Heart right ventricle (tissue), 16 donors: ENCODE measurements at regions of chr1 and their contacts with region 1.

Region 1: GRCh38 chr1:158124999-158125398 is 55.7 kb upstream of the CD1D start:
- DNase-seq: peak; percentile 72 to 94
- ATAC-seq: peak; percentile 93 to 99 (median 97)
- H3K4me3 ChIP-seq: peak overlapping the region in 1 of 10 donors; percentile 28
- H3K27ac ChIP-seq: no peak overlapping the region
- H3K4me1 ChIP-seq: peaks cover 0 to 4% (median 0%) of the 10 kb centered on the region in 9 donors
- H3K27me3 ChIP-seq: peaks cover 0 to 17% (median 8%) of the 10 kb centered on the region in 7 donors
- CTCF ChIP-seq: peak; percentile 86 to 96 (median 93)

Region 2: GRCh38 chr1:156627313-156627880 is 1497.6 kb before region 1 on chr1:
- intact Hi-C with region 1: no loop called
- DNase-seq: peak in 1 of 2 donors; percentile 22
- ATAC-seq: no peak
- H3K4me3 ChIP-seq: no peak overlapping the region
- H3K27ac ChIP-seq: no peak overlapping the region
- H3K4me1 ChIP-seq: peaks cover 10 to 34% (median 24%) of the 10 kb centered on the region in 9 donors
- H3K27me3 ChIP-seq: peaks cover 19 to 100% (median 85%) of the 10 kb centered on the region in 7 donors
- CTCF ChIP-seq: peak; percentile 39 to 74 (median 64)

Region 3: DNA sequence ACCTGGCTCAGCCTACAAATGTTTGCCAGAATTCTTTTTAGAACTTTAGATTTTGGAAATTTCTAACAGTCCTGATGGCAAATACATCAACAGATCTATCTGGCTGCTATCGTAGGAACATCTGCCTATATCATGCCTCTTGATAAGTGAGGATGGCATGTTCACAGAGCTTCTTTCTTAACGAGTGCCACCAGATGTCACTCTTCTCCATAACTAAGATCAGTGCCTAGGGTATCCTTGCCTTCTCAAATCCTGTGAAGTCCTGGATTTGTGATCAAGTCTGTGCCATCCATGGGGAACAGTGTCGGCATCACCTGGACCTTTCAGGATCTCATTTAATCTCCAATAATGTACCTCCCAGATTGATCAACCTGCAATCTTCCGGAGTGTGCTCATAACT is 246.9 kb before region 1 on chr1:
- intact Hi-C with region 1: loop called in 2 of 10 experiments (anchors 10 kb)
- DNase-seq: no peak
- ATAC-seq: peak in 5 of 8 donors; percentile 38 to 80 (median 64)
- H3K4me3 ChIP-seq: no peak overlapping the region
- H3K27ac ChIP-seq: no peak overlapping the region
- H3K4me1 ChIP-seq: peaks cover 0 to 12% (median 0%) of the 10 kb centered on the region in 9 donors
- H3K27me3 ChIP-seq: peaks cover 0 to 5% (median 0%) of the 10 kb centered on the region in 7 donors
- CTCF ChIP-seq: peak in 7 of 9 donors; percentile 27 to 65 (median 52)

Region 4: GRCh38 chr1:157969697-157970485 is 155.1 kb before region 1 on chr1:
- intact Hi-C with region 1: loop called in 7 of 10 experiments (anchors 2 to 5 kb)
- DNase-seq: peak in 1 of 2 donors; percentile 66
- ATAC-seq: peak in 7 of 8 donors; percentile 62 to 78 (median 64)
- H3K4me3 ChIP-seq: no peak overlapping the region
- H3K27ac ChIP-seq: peak overlapping the region in 3 of 10 donors; percentile 2 to 46 (median 33)
- H3K4me1 ChIP-seq: peaks cover 0 to 23% (median 13%) of the 10 kb centered on the region in 9 donors
- H3K27me3 ChIP-seq: no peaks in the 10 kb centered on the region
- CTCF ChIP-seq: peak; percentile 57 to 84 (median 79)

Region 5: GRCh38 chr1:157992031-157992832 is 132.8 kb before region 1 on chr1:
- intact Hi-C with region 1: loop called in 6 of 10 experiments (anchors 1 to 10 kb)
- DNase-seq: peak; percentile 72 to 77
- ATAC-seq: peak; percentile 64 to 83 (median 70)
- H3K4me3 ChIP-seq: peak overlapping the region in 2 of 10 donors; percentile 66 to 95
- H3K27ac ChIP-seq: peak overlapping the region in 9 of 10 donors; percentile 39 to 94 (median 55)
- H3K4me1 ChIP-seq: peaks cover 4 to 47% (median 18%) of the 10 kb centered on the region in 9 donors
- H3K27me3 ChIP-seq: peaks cover 0 to 31% (median 6%) of the 10 kb centered on the region in 7 donors
- CTCF ChIP-seq: peak; percentile 84 to 98 (median 95)

Region 6: GRCh38 chr1:158149577-158150269 is 24.7 kb after region 1 on chr1:
- intact Hi-C with region 1: loop called in 2 of 10 experiments (anchors 1 kb)
- DNase-seq: peak; percentile 97 to 98
- ATAC-seq: peak; percentile 95 to 98 (median 97)
- H3K4me3 ChIP-seq: peak overlapping the region in 9 of 10 donors; percentile 6 to 55 (median 51)
- H3K27ac ChIP-seq: peak overlapping the region; percentile 53 to 93 (median 80)
- H3K4me1 ChIP-seq: peaks cover 11 to 82% (median 42%) of the 10 kb centered on the region in 9 donors
- H3K27me3 ChIP-seq: no peaks in the 10 kb centered on the region
- CTCF ChIP-seq: no peak